Heart left ventricle (tissue), 16 donors: ENCODE measurements at regions of chr21 and their contacts with region 1.

Region 1: DNA sequence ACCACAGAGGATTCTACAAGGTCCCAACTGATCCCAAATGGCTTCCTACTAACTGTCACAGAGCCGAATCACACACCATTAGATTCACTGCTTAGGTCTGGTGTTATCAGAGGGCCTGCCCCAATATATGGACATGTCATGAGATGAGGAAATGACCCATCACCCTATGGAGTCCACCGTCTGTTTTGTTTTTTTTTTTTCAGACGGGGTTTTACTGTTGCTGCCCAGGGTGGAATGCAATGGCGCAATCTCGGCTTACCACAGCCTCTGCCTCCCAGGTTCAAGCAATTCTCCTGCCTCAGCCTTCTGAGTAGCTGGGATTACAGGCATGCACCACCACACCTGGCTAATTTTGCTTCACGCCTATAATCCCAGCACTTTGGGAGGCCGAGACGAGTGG is 83.8 kb upstream of the ETS2 start:
- DNase-seq: no peak
- ATAC-seq: no peak
- H3K4me3 ChIP-seq: no peak overlapping the region
- H3K27ac ChIP-seq: no peak overlapping the region
- H3K4me1 ChIP-seq: no peaks in the 10 kb centered on the region
- H3K27me3 ChIP-seq: no peaks in the 10 kb centered on the region
- CTCF ChIP-seq: no peak
- POLR2A ChIP-seq: no peak

Region 2: GRCh38 chr21:38669176-38669575 is 52.8 kb before region 1 on chr21:
- intact Hi-C with region 1: loop called in 1 of 10 experiments (anchors 10 kb)
- DNase-seq: no peak
- ATAC-seq: peak in 1 of 4 donors; percentile 42
- H3K4me3 ChIP-seq: no peak overlapping the region
- H3K27ac ChIP-seq: no peak overlapping the region
- H3K4me1 ChIP-seq: peaks cover 0 to 8% (median 0%) of the 10 kb centered on the region in 12 donors
- H3K27me3 ChIP-seq: peaks cover 0 to 22% (median 0%) of the 10 kb centered on the region in 9 donors
- CTCF ChIP-seq: peak; percentile 13 to 59 (median 37)
- POLR2A ChIP-seq: no peak